Motor neuron (in vitro differentiated cells): ENCODE measurements at regions of chr20 and their contacts with region 1.

Region 1: DNA sequence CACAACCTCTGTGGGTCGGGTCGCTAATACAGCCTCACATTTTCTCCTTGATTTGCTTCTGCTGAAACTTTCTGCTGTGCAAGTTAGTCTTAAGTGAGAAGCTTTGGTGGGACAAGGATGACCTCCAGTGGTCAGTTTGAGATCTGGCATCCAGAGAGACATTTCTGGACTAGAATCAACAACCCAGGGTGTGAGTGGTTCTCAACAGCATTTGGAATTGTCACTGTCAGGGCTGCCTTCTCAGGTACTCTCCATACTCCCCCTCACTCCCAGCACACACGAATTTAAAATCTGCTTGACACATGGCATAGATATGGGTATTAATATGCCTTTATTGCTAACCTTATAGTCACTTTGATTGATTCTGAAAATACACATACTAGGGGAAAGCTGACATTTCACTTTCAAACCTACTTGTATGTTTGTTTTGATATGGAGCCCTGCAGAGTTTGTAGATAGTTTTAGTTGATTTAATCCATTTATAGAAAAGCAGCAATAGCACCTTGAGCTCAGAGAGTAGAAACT is 13.2 kb downstream of the OTOR start:
- ATAC-seq: peak; percentile 77 to 93 (median 79)
- H3K4me3 ChIP-seq: no peak overlapping the region
- H3K27ac ChIP-seq: no peak overlapping the region
- H3K4me1 ChIP-seq: peaks cover 7 to 14% of the 10 kb centered on the region in 2 donors

Region 2: DNA sequence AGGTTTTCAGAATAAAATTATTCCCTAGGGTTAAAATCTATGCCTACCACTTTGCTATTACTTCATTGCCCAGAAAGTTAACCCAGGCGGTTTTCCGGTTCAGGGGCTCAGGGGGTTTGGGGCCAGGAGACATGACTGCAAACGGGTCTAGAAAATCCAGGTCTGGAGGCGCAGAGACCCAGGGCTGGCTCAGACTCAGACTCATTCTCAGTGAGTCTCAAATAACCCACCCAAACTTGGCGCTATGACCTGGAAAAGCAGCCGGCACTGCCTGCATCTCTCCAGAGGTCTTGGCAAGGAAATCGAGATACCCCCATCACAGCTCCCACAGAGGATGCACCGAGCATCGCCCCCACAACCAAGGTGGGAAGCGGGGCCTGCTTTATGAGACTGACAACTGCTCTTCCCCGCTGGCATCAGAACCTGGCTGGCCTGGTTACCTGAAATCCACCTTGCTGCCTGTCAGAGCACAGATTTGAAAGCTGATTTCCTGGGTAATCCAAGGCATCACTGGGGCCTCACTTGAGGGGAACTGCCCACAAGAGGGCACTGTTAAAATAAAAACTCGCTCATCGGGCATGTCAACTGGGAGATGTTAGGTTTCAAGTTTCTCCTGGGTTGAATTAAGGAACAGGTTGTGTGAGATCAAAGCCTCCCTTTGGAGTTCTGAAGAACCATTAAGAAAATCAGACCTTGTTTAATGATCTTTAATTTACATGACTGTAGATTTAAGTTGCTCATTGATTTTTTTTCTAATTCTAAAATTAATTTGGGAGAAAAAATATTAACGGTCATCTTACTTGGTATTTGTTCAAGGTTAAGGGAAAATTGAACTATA is 243.2 kb before region 1 on chr20:
- in situ Hi-C with region 1: loop called in 1 of 9 experiments (anchors 25 kb)
- ATAC-seq: peak in 4 of 8 experiments; percentile 39 to 88 (median 68)
- H3K4me3 ChIP-seq: no peak overlapping the region
- H3K27ac ChIP-seq: no peak overlapping the region
- H3K4me1 ChIP-seq: no peaks in the 10 kb centered on the region